PC-3 (cell line): ENCODE measurements at regions of chr5 and their contacts with region 1.

Region 1: GRCh38 chr5:87008751-87009560 is 258.7 kb upstream of the RASA1 start:
- DNase-seq: no peak
- ATAC-seq: peak; percentile 31
- H3K4me3 ChIP-seq: no peak overlapping the region
- H3K27ac ChIP-seq: no peak overlapping the region
- H3K4me1 ChIP-seq: peaks cover 5% of the 10 kb centered on the region
- H3K27me3 ChIP-seq: no peaks in the 10 kb centered on the region
- CTCF ChIP-seq: no peak

Region 2: GRCh38 chr5:86880785-86881492 is 128.0 kb before region 1 on chr5:
- CTCF ChIA-PET with region 1: interaction called, 3 read pairs
- POLR2A ChIA-PET with region 1: no interaction called
- intact Hi-C with region 1: loop called (anchors 1 kb)
- DNase-seq: peak; percentile 96
- ATAC-seq: peak; percentile 91
- H3K4me3 ChIP-seq: no peak overlapping the region
- H3K27ac ChIP-seq: no peak overlapping the region
- H3K4me1 ChIP-seq: peaks cover 13% of the 10 kb centered on the region; the same call in 1 of the 2 replicates
- H3K27me3 ChIP-seq: no peaks in the 10 kb centered on the region
- CTCF ChIP-seq: peak; percentile 100

Region 3: GRCh38 chr5:86909456-86910295 is 99.3 kb before region 1 on chr5:
- CTCF ChIA-PET with region 1: no interaction called
- POLR2A ChIA-PET with region 1: no interaction called
- intact Hi-C with region 1: no loop called
- DNase-seq: peak; percentile 97
- ATAC-seq: peak; percentile 90
- H3K4me3 ChIP-seq: peak overlapping the region; percentile 44
- H3K27ac ChIP-seq: peak overlapping the region; percentile 89
- H3K4me1 ChIP-seq: peaks cover 39% of the 10 kb centered on the region
- H3K27me3 ChIP-seq: no peaks in the 10 kb centered on the region
- CTCF ChIP-seq: no peak

Region 4: GRCh38 chr5:86986837-86987236 is 22.1 kb before region 1 on chr5:
- CTCF ChIA-PET with region 1: interaction called, 6 read pairs
- POLR2A ChIA-PET with region 1: no interaction called
- intact Hi-C with region 1: loop called (anchors 1 kb)
- DNase-seq: peak; percentile 53
- ATAC-seq: peak; percentile 63
- H3K4me3 ChIP-seq: no peak overlapping the region
- H3K27ac ChIP-seq: no peak overlapping the region
- H3K4me1 ChIP-seq: no peaks in the 10 kb centered on the region
- H3K27me3 ChIP-seq: no peaks in the 10 kb centered on the region
- CTCF ChIP-seq: peak; percentile 69

Region 5: GRCh38 chr5:87361031-87361443 is 352.1 kb after region 1 on chr5:
- CTCF ChIA-PET with region 1: no interaction called
- POLR2A ChIA-PET with region 1: no interaction called
- intact Hi-C with region 1: no loop called
- DNase-seq: no peak
- ATAC-seq: no peak
- H3K4me3 ChIP-seq: no peak overlapping the region
- H3K27ac ChIP-seq: no peak overlapping the region
- H3K4me1 ChIP-seq: no peaks in the 10 kb centered on the region
- H3K27me3 ChIP-seq: no peaks in the 10 kb centered on the region
- CTCF ChIP-seq: no peak